ENCODE measurements at regions of chr13 and their contacts with region 1.

Region 1: GRCh38 chr13:97018029-97018831 is 24.0 kb upstream of the OXGR1 start:
- DNase-seq: no peak
- ATAC-seq: peak; percentile 45 to 65
- H3K4me3 ChIP-seq: no peak overlapping the region
- H3K27ac ChIP-seq: no peak overlapping the region
- H3K4me1 ChIP-seq: no peaks in the 10 kb centered on the region
- H3K27me3 ChIP-seq: no peaks in the 10 kb centered on the region
- CTCF ChIP-seq: peak; percentile 56 to 84 (median 63)
- POLR2A ChIP-seq: no peak

Region 2: DNA sequence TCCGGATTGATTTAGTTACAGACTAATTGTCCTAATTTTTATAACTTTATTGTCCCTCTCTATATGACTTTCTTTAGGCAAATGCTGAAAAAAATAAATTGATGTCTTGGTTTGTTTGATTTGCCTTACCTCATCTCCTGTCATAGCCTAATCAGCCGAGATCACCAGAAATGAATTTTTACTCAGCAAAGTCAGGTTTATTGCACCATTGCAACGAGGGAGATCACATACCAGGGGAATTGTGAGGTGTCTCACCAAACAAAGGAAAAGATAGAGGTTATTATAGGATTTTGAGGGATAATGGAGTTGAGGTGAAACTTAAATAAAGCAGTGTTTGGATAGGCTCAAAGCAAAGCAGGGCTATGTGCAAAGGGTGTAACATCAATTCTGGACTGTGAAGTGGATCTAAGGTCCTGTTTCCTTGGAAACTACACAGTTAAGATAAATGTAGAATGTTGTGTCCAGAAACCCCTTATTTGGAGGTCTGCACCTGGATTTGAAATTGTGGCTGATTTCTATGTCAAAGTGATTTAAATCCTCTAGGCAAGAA is 396.5 kb before region 1 on chr13:
- in situ Hi-C with region 1: no loop called
- intact Hi-C with region 1: no loop called
- DNase-seq: no peak
- ATAC-seq: no peak
- H3K4me3 ChIP-seq: no peak overlapping the region
- H3K27ac ChIP-seq: no peak overlapping the region
- H3K4me1 ChIP-seq: no peaks in the 10 kb centered on the region
- H3K27me3 ChIP-seq: no peaks in the 10 kb centered on the region
- CTCF ChIP-seq: no peak
- POLR2A ChIP-seq: no peak

Region 3: GRCh38 chr13:96880419-96880818 is 137.8 kb before region 1 on chr13:
- in situ Hi-C with region 1: no loop called
- intact Hi-C with region 1: no loop called
- DNase-seq: no peak
- ATAC-seq: no peak
- H3K4me3 ChIP-seq: no peak overlapping the region
- H3K27ac ChIP-seq: no peak overlapping the region
- H3K4me1 ChIP-seq: no peaks in the 10 kb centered on the region
- H3K27me3 ChIP-seq: no peaks in the 10 kb centered on the region
- CTCF ChIP-seq: no peak
- POLR2A ChIP-seq: no peak

Region 4: GRCh38 chr13:97411984-97412383 is 393.8 kb after region 1 on chr13:
- in situ Hi-C with region 1: no loop called
- intact Hi-C with region 1: no loop called
- DNase-seq: no peak
- ATAC-seq: no peak
- H3K4me3 ChIP-seq: no peak overlapping the region
- H3K27ac ChIP-seq: no peak overlapping the region
- H3K4me1 ChIP-seq: peaks cover 0 to 3% of the 10 kb centered on the region in 2 donors
- H3K27me3 ChIP-seq: no peaks in the 10 kb centered on the region
- CTCF ChIP-seq: no peak
- POLR2A ChIP-seq: no peak

Region 5: DNA sequence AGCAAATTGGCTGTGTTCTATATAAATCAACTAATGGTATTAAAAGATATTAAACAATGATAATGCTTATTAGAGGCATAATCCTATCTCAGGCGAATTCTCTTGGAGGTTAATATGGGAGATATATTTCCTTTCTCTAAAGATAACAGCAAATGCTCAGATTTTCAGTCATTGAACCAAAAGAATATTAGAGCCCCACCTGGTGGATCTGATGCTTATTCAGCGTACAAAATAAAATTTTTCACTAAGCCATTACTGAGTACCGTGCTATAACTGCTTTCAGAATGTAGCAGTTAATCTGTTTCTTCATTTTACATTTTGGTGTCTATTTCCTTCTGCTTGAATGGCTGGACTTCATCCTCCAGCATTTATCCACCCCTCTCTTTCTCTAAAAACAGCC is 791.9 kb after region 1 on chr13:
- in situ Hi-C with region 1: loop called in 1 of 4 experiments (anchors 25 kb)
- intact Hi-C with region 1: no loop called
- DNase-seq: no peak
- ATAC-seq: no peak
- H3K4me3 ChIP-seq: no peak overlapping the region
- H3K27ac ChIP-seq: no peak overlapping the region
- H3K4me1 ChIP-seq: no peaks in the 10 kb centered on the region
- H3K27me3 ChIP-seq: no peaks in the 10 kb centered on the region
- CTCF ChIP-seq: peak in 1 of 5 experiments; percentile 24
- POLR2A ChIP-seq: no peak

Measured in gastrocnemius medialis (tissue), 4 donors.